CD4-positive, alpha-beta memory T cell (primary cell): ENCODE measurements at regions of chr20 and their contacts with region 1.

Region 1: GRCh38 chr20:56392282-56393137 is at the start of gene CSTF1:
- DNase-seq: peak; percentile 99 to 100 (median 99)
- H3K4me3 ChIP-seq: peak within 1 kb of the TSS; percentile 100
- H3K4me3 Mint-ChIP-seq: no peak within 1 kb of the TSS
- H3K27ac ChIP-seq: peak within 1 kb of the TSS; percentile 91
- H3K27ac Mint-ChIP-seq: peak within 1 kb of the TSS in 1 of 7 donors; percentile 96
- H3K4me1 ChIP-seq: peaks cover 34% of the 10 kb centered on the region
- H3K4me1 Mint-ChIP-seq: peaks cover 25 to 28% (median 28%) of the 10 kb centered on the region in 4 donors
- H3K27me3 ChIP-seq: no peaks in the 10 kb centered on the region
- H3K27me3 Mint-ChIP-seq: no peaks in the 10 kb centered on the region
- total RNA-seq, gene CSTF1: 50.1 to 55.3 TPM

Region 2: DNA sequence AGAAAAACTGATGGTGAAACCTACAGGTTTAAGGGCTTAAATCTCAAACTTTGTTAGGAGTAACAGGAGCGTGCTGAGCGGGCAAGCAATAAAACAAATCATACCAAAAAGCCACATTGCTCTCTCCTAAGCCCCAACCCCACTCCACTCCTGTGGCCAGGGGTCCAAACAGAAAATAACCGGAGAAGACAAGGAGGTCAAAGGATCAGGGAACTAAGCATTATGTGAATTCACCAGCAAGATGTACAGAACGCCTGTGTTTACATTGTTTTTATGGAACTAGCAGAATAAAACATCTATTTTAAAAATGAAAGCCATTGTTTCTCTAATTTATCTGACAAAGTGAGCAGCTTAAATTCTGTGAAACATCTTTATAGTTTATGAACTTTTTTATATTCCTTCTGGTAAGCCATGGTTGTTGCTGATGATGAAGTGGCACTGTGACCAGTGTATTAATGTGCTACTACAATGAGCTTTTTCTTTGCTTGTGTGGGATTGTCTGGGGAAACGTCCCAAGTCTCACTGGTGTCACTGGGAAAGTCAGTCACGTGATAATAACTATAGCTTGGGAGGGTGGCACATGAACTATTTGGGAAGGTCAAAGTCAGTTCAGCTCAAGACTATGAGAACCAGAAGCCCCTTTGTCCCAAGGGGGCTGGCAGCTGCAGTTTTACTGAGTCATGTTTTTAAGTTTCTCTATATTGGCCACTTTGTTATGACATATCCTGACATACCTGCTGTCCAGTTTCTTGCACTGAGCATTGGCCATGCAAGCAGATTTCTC is 24.0 kb before region 1 on chr20:
- CTCF ChIA-PET with region 1: no interaction called
- POLR2A ChIA-PET with region 1: interaction called, 10 read pairs
- intact Hi-C with region 1: no loop called
- DNase-seq: no peak
- H3K4me3 ChIP-seq: no peak overlapping the region
- H3K4me3 Mint-ChIP-seq: no peak overlapping the region
- H3K27ac ChIP-seq: no peak overlapping the region
- H3K27ac Mint-ChIP-seq: peak overlapping the region in 3 of 7 donors; percentile 5 to 39 (median 29)
- H3K4me1 ChIP-seq: peaks cover 8% of the 10 kb centered on the region
- H3K4me1 Mint-ChIP-seq: peaks cover 5 to 17% (median 8%) of the 10 kb centered on the region in 4 donors
- H3K27me3 ChIP-seq: no peaks in the 10 kb centered on the region
- H3K27me3 Mint-ChIP-seq: no peaks in the 10 kb centered on the region

Region 3: GRCh38 chr20:56422076-56422823 is 29.7 kb after region 1 on chr20:
- CTCF ChIA-PET with region 1: interaction called, 15 read pairs
- POLR2A ChIA-PET with region 1: interaction called, 20 read pairs
- intact Hi-C with region 1: no loop called
- DNase-seq: no peak
- H3K4me3 ChIP-seq: no peak overlapping the region
- H3K4me3 Mint-ChIP-seq: peak overlapping the region in 7 of 8 donors; percentile 9 to 81 (median 50)
- H3K27ac ChIP-seq: peak overlapping the region; percentile 17
- H3K27ac Mint-ChIP-seq: peak overlapping the region; percentile 84 to 97 (median 91)
- H3K4me1 ChIP-seq: peaks cover 66% of the 10 kb centered on the region
- H3K4me1 Mint-ChIP-seq: peaks cover 41 to 81% (median 58%) of the 10 kb centered on the region in 4 donors
- H3K27me3 ChIP-seq: no peaks in the 10 kb centered on the region
- H3K27me3 Mint-ChIP-seq: no peaks in the 10 kb centered on the region

Region 4: GRCh38 chr20:56468316-56469082 is 76.0 kb after region 1 on chr20 and contains the start of gene RTF2:
- CTCF ChIA-PET with region 1: interaction called, 5 read pairs
- POLR2A ChIA-PET with region 1: interaction called, 44 read pairs
- intact Hi-C with region 1: loop called (anchors 1 kb)
- DNase-seq: peak; percentile 93 to 98 (median 96)
- H3K4me3 ChIP-seq: peak within 1 kb of the TSS; percentile 70 to 99
- H3K4me3 Mint-ChIP-seq: peak within 1 kb of the TSS; percentile 98 to 100 (median 100)
- H3K27ac ChIP-seq: peak within 1 kb of the TSS; percentile 87
- H3K27ac Mint-ChIP-seq: peak within 1 kb of the TSS; percentile 98 to 100 (median 100)
- H3K4me1 ChIP-seq: peaks cover 43% of the 10 kb centered on the region
- H3K4me1 Mint-ChIP-seq: peaks cover 22 to 55% (median 36%) of the 10 kb centered on the region in 4 donors
- H3K27me3 ChIP-seq: no peaks in the 10 kb centered on the region
- H3K27me3 Mint-ChIP-seq: no peaks in the 10 kb centered on the region
- total RNA-seq, gene RTF2: 66.0 to 67.0 TPM

Region 5: GRCh38 chr20:57175397-57176010 is 783.0 kb after region 1 on chr20:
- CTCF ChIA-PET with region 1: no interaction called
- POLR2A ChIA-PET with region 1: no interaction called
- intact Hi-C with region 1: no loop called
- DNase-seq: no peak
- H3K4me3 ChIP-seq: no peak overlapping the region
- H3K4me3 Mint-ChIP-seq: no peak overlapping the region
- H3K27ac ChIP-seq: no peak overlapping the region
- H3K27ac Mint-ChIP-seq: no peak overlapping the region
- H3K4me1 ChIP-seq: no peaks in the 10 kb centered on the region
- H3K4me1 Mint-ChIP-seq: no peaks in the 10 kb centered on the region
- H3K27me3 ChIP-seq: no peaks in the 10 kb centered on the region
- H3K27me3 Mint-ChIP-seq: peaks cover 8 to 10% of the 10 kb centered on the region in 2 donors